ENCODE measurements at regions of chr16 and their contacts with region 1.

Region 1: DNA sequence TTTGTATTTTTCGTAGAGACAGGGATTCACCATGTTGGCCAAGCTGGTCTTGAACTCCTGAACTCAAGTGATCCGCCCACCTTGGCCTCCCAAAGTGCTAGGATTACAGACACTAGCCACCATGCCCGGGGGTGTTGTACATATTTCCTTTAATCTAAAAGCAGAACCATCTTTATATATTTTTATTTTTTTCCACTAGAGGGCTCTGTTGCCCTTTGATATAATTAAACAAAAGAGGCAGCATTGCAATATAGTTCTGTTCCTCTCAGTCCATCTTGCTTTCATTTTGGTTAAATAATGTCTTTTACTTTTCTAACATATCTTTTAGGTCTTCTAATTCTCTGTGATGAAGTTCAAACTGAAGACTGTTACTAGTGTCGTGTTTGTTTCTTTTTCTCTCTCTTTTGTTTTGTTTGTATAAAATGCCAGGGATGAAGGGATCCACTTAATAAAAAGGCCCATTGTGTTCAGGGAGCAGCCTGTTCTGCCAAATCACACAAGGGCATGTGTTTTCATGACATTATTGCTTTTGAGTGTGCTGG is 23.4 kb downstream of the WWOX start:
- DNase-seq: no peak
- H3K4me3 Mint-ChIP-seq: no peak overlapping the region
- H3K27ac Mint-ChIP-seq: no peak overlapping the region
- H3K4me1 Mint-ChIP-seq: peaks cover 5% of the 10 kb centered on the region
- H3K27me3 Mint-ChIP-seq: no peaks in the 10 kb centered on the region

Region 2: GRCh38 chr16:78235168-78235800 is 112.4 kb after region 1 on chr16:
- intact Hi-C with region 1: loop called (anchors 1 kb)
- DNase-seq: peak; percentile 41
- H3K4me3 Mint-ChIP-seq: no peak overlapping the region
- H3K27ac Mint-ChIP-seq: no peak overlapping the region
- H3K4me1 Mint-ChIP-seq: no peaks in the 10 kb centered on the region
- H3K27me3 Mint-ChIP-seq: no peaks in the 10 kb centered on the region

Measured in activated T-helper 1 cell treated with anti-CD3 and anti-CD28 coated beads, Interleukin-12 subunit alpha, Interleukin-12 subunit beta, Interleukin-2, Interleukin-4 antibody, amounts not matched to agents 30 ng/mL and 10 ng/mL and 1 ng/mL, durations not matched to agents 14 hours and 24 hours and 36 hours (primary cell).